PC-9 (cell line): ENCODE measurements at regions of chr18 and their contacts with region 1.

Region 1: DNA sequence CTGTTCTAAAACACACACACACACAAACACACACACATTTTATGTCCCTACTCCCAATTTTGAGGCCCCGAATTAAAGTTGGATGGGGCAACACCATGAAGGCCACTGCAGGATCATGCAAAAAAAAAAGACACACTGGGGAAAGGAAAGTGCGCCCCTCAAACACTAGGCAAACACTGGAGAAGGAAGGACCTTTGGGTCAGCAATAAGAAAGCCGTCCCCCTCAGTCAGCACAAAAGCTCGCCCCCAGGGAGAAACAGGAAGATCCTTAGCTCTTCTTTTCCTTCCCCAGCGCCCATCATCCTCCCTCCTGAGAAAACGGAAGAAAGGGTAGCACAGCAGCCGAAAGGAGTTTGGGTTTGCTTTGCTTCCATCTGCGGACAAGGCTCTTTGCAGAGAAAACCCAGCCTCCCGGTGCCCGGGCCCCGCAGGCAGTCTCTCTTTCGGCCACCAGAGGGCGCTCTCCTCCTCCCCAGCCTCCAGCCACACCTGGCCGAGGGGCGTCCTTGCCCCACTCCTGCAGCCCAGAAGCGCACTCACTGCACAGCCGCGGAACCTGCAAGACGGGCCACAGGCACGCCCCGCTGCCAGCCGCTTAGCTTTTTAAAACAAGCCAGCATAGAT is 248.5 kb downstream of the CDH20 start:
- DNase-seq: peak in 1 of 2 experiments; percentile 58
- H3K4me3 ChIP-seq: no peak overlapping the region
- H3K27ac ChIP-seq: no peak overlapping the region
- H3K4me1 ChIP-seq: no peaks in the 10 kb centered on the region
- H3K27me3 ChIP-seq: no peaks in the 10 kb centered on the region
- CTCF ChIP-seq: peak; percentile 93

Region 2: GRCh38 chr18:61710082-61710620 is 128.5 kb after region 1 on chr18:
- CTCF ChIA-PET with region 1: no interaction called
- POLR2A ChIA-PET with region 1: no interaction called
- intact Hi-C with region 1: no loop called
- DNase-seq: no peak
- H3K4me3 ChIP-seq: no peak overlapping the region
- H3K27ac ChIP-seq: no peak overlapping the region
- H3K4me1 ChIP-seq: no peaks in the 10 kb centered on the region
- H3K27me3 ChIP-seq: no peaks in the 10 kb centered on the region
- CTCF ChIP-seq: no peak

Region 3: DNA sequence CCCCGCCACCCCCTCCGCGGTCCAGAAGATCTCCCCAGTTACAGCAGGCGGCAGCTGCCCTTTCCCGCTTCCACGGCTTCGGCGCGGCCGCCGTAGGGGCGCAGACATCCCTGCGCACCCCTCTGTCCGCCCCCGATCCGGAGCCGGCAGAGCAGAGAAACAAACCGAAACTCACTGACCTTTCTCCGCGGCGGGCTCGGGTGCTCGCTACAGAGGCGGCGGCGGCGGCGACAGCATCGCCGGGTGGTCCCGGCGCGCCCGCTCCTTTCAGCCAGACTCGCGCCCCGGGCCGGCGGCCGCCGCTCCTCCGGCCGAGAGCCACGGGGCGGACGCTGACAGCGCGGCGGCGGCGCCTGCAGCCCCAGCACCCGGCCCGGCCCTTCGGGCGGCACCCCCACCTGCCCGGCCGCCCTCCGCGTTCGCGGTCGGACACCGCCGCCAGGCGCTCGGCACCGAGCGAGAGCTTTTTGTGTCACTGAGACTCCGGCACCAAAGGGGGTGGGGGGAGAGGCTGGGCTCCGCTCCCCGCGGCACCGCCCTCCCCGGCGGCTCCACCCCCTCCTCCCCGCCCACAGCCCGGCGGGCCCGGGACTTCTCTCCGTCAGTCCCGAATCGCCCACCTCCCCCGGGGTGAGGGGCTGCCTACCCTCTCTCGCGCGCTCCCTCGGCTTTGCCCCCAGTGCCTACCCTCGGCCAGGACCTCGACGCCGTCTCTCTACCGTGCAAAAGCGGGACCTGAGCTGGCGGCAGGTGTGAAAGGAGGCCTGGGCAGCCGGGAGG is 312.5 kb after region 1 on chr18:
- CTCF ChIA-PET with region 1: no interaction called
- POLR2A ChIA-PET with region 1: no interaction called
- intact Hi-C with region 1: loop called (anchors 5 kb)
- DNase-seq: peak in 1 of 2 experiments; percentile 53
- H3K4me3 ChIP-seq: peak overlapping the region; percentile 47; the same call in 1 of the 2 replicates
- H3K27ac ChIP-seq: no peak overlapping the region
- H3K4me1 ChIP-seq: no peaks in the 10 kb centered on the region
- H3K27me3 ChIP-seq: no peaks in the 10 kb centered on the region
- CTCF ChIP-seq: no peak